Psoas muscle (tissue), 8 donors: ENCODE measurements at regions of chr3 and their contacts with region 1.

Region 1: DNA sequence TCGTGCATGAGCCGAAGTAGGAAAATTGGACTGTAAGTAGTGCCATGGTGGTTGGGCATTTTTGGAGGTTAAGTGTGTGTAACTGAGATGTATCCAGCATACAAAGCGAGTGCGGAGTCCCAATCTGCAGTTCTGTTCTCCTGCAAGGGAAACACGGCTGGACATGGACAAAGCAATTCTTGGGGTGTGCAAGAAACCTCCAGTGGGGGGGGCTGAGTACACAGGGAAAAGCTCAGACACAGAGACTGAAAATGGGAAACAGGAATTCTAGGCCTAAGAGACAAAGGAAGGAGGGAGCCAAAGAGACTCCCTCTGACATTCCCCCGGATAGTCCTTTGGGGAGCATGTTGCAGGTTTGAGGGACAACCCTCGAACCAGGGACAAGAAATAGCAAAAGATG is 83.2 kb upstream of the PLSCR4 start:
- DNase-seq: no peak
- ATAC-seq: no peak
- H3K4me3 ChIP-seq: no peak overlapping the region
- H3K27ac ChIP-seq: no peak overlapping the region
- H3K4me1 ChIP-seq: no peaks in the 10 kb centered on the region
- H3K27me3 ChIP-seq: no peaks in the 10 kb centered on the region
- CTCF ChIP-seq: peak; percentile 14

Region 2: DNA sequence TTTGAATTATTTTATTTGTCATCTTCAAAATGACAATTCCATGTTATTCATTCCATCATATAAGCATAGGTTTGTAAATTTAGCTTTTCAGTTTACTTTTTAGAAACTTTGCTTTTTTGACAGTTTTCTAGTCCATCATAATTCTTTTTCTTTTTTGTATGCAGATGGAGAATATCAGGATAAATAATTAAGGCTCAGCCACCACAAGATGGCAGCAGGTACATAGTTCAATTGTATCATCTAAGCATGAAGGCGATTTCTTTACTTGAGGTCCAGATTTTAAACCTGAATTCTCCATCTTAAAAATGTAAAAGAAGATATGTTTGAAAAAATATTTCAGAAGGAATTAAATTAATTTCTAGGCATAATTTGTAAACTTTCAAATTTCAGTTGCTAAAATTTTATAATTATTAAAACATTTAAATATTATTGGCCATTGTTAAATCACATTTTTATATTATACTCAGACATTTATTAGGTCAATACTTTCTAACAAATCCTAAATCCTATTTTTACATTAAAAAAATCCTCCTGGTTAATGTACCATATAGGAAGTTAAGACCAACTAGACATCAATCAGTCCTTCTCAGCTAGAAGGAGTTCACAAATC is 255.9 kb after region 1 on chr3:
- intact Hi-C with region 1: loop called in 1 of 2 experiments (anchors 10 kb)
- DNase-seq: no peak
- ATAC-seq: no peak
- H3K4me3 ChIP-seq: no peak overlapping the region
- H3K27ac ChIP-seq: no peak overlapping the region
- H3K4me1 ChIP-seq: no peaks in the 10 kb centered on the region
- H3K27me3 ChIP-seq: no peaks in the 10 kb centered on the region
- CTCF ChIP-seq: peak; percentile 48